Testis (tissue), 5 donors: ENCODE measurements at regions of chr2 and their contacts with region 1.

Region 1: GRCh38 chr2:231411831-231412617 is 16.5 kb downstream of the B3GNT7 start:
- DNase-seq: peak; percentile 91
- H3K4me3 ChIP-seq: peak overlapping the region; percentile 56 to 58
- H3K27ac ChIP-seq: peak overlapping the region; percentile 20 to 62
- H3K4me1 ChIP-seq: peaks cover 14% of the 10 kb centered on the region
- H3K27me3 ChIP-seq: no peaks in the 10 kb centered on the region
- CTCF ChIP-seq: peak; percentile 64 to 84 (median 74)
- POLR2A ChIP-seq: no peak

Region 2: DNA sequence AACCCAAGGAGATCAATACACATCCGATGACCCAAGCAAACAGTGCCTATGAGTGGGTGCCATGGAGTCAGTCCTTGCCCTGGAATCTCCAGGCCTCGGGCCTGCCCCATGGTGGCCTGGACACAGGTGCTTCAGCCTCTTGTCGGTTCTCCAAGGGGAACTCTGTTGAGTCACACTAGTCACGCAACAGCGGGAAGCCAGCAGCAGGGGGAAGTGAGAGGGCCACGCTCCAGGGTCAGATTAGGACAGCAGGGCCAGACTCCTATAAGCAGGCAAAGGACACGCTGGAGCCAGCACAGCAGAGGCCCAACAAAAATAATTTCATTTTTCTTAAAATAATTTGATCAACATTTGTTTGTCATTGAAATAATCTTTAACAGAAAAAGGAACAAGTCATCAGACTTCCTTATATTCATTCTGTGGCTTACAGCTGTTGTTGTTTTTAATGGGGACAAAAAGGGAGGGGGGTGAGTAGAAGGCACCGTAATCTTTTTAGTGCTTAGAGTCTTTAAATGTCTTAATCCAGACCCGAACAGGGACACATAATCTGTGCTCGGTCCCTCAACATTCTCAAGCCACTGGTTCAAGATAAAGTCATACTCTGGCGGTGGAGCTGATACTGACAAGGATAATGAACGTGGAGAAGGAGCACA is 230.0 kb before region 1 on chr2:
- intact Hi-C with region 1: no loop called
- DNase-seq: peak; percentile 45
- H3K4me3 ChIP-seq: peak overlapping the region in 1 of 2 donors; percentile 10
- H3K27ac ChIP-seq: no peak overlapping the region
- H3K4me1 ChIP-seq: peaks cover 3% of the 10 kb centered on the region
- H3K27me3 ChIP-seq: no peaks in the 10 kb centered on the region
- CTCF ChIP-seq: no peak
- POLR2A ChIP-seq: no peak

Region 3: DNA sequence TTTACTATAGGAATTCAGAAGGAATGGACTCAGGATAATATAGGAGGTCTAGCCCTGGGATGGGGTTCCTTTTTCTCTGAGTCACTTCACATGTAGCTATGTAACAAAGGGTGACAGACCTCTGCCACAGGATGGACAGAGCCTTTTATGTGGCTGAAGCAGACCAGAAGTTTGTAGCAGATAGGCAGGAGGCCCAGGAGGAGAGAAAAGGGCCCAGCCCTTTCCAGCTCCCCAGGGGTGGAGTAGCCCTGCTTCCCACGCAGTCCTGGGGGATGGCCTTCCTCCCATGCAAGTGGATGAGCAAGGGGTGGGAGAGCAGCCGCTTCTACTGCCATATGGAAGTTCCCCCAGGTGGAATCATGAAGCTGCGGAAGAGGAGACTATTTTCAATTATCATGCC is 173.3 kb before region 1 on chr2:
- intact Hi-C with region 1: loop called (anchors 10 kb)
- DNase-seq: no peak
- H3K4me3 ChIP-seq: no peak overlapping the region
- H3K27ac ChIP-seq: no peak overlapping the region
- H3K4me1 ChIP-seq: no peaks in the 10 kb centered on the region
- H3K27me3 ChIP-seq: no peaks in the 10 kb centered on the region
- CTCF ChIP-seq: no peak
- POLR2A ChIP-seq: no peak

Region 4: GRCh38 chr2:231297108-231297908 is 114.7 kb before region 1 on chr2:
- intact Hi-C with region 1: loop called (anchors 10 kb)
- DNase-seq: peak; percentile 73
- H3K4me3 ChIP-seq: no peak overlapping the region
- H3K27ac ChIP-seq: no peak overlapping the region
- H3K4me1 ChIP-seq: no peaks in the 10 kb centered on the region
- H3K27me3 ChIP-seq: no peaks in the 10 kb centered on the region
- CTCF ChIP-seq: peak; percentile 45 to 56 (median 48)
- POLR2A ChIP-seq: no peak

Region 5: GRCh38 chr2:231475965-231476364 is 63.9 kb after region 1 on chr2:
- intact Hi-C with region 1: no loop called
- DNase-seq: no peak
- H3K4me3 ChIP-seq: no peak overlapping the region
- H3K27ac ChIP-seq: no peak overlapping the region
- H3K4me1 ChIP-seq: no peaks in the 10 kb centered on the region
- H3K27me3 ChIP-seq: no peaks in the 10 kb centered on the region
- CTCF ChIP-seq: no peak
- POLR2A ChIP-seq: no peak

Region 6: GRCh38 chr2:231489990-231490389 is 78.0 kb after region 1 on chr2:
- intact Hi-C with region 1: no loop called
- DNase-seq: peak; percentile 55
- H3K4me3 ChIP-seq: no peak overlapping the region
- H3K27ac ChIP-seq: no peak overlapping the region
- H3K4me1 ChIP-seq: no peaks in the 10 kb centered on the region
- H3K27me3 ChIP-seq: no peaks in the 10 kb centered on the region
- CTCF ChIP-seq: no peak
- POLR2A ChIP-seq: no peak

Region 7: GRCh38 chr2:231557571-231558237 is 145.7 kb after region 1 on chr2:
- intact Hi-C with region 1: no loop called
- DNase-seq: peak; percentile 87
- H3K4me3 ChIP-seq: no peak overlapping the region
- H3K27ac ChIP-seq: peak overlapping the region; percentile 74 to 83
- H3K4me1 ChIP-seq: peaks cover 17% of the 10 kb centered on the region
- H3K27me3 ChIP-seq: no peaks in the 10 kb centered on the region
- CTCF ChIP-seq: peak; percentile 74 to 85 (median 79)
- POLR2A ChIP-seq: no peak